PC-3 (cell line): ENCODE measurements at regions of chr1 and their contacts with region 1.

Region 1: DNA sequence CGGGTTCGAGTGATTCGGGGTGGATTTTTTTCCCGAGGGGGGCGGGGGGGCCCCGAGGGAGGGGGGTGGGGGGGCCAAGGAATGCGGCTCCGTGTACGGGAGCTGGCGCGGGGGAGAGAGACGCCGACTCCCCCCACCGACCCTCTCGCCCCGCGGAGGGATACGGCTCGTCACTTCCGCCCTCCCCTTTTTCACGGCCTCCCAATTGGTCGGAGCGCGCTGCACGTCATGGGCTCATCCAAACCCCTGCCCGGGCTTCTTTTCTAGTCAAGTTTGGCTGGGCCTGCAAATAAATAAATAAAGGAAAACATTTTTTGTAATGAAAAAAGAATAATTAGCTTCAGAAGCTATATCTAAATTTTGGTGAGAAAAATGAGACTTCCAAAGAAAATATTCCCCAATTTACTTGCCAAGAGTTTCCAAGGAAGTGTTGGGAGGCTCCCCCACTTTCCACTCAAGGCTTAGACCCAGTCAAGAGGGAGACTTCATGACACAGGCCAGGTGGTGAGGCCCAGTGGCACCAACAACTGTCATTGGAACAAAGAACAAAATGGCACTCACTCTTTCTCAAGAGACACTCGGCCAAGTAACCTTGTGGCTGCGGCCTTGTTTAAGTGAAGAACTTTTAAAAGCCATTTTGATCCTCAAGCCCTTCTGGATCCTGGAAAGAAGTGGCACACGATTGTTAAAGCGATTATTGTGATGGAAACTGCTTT is at the start of gene POGZ:
- DNase-seq: peak; percentile 97
- ATAC-seq: peak; percentile 81
- H3K4me3 ChIP-seq: peak within 1 kb of the TSS; percentile 100
- H3K27ac ChIP-seq: peak within 1 kb of the TSS; percentile 79
- H3K4me1 ChIP-seq: peaks cover 12% of the 10 kb centered on the region
- H3K27me3 ChIP-seq: no peaks in the 10 kb centered on the region
- CTCF ChIP-seq: no peak
- total RNA-seq, gene POGZ: 30.5 and 77.9 TPM in 2 replicates

Region 2: GRCh38 chr1:151472856-151473731 is 13.6 kb after region 1 on chr1:
- CTCF ChIA-PET with region 1: no interaction called
- POLR2A ChIA-PET with region 1: interaction called, 6 read pairs
- intact Hi-C with region 1: loop called (anchors 1 kb)
- DNase-seq: peak; percentile 43
- ATAC-seq: peak; percentile 51
- H3K4me3 ChIP-seq: peak overlapping the region; percentile 41
- H3K27ac ChIP-seq: no peak overlapping the region
- H3K4me1 ChIP-seq: no peaks in the 10 kb centered on the region
- H3K27me3 ChIP-seq: no peaks in the 10 kb centered on the region
- CTCF ChIP-seq: no peak

Region 3: GRCh38 chr1:151510957-151511635 is 51.6 kb after region 1 on chr1 and contains the start of gene CGN:
- CTCF ChIA-PET with region 1: no interaction called
- POLR2A ChIA-PET with region 1: interaction called, 8 read pairs
- intact Hi-C with region 1: loop called (anchors 1 kb)
- DNase-seq: peak; percentile 95
- ATAC-seq: peak; percentile 80
- H3K4me3 ChIP-seq: peak within 1 kb of the TSS; percentile 84
- H3K27ac ChIP-seq: peak within 1 kb of the TSS; percentile 96
- H3K4me1 ChIP-seq: peaks cover 50% of the 10 kb centered on the region
- H3K27me3 ChIP-seq: no peaks in the 10 kb centered on the region
- CTCF ChIP-seq: no peak
- total RNA-seq, gene CGN: 13.3 and 20.1 TPM in 2 replicates

Region 4: GRCh38 chr1:151539990-151540981 is 80.8 kb after region 1 on chr1 and contains the start of gene TUFT1:
- CTCF ChIA-PET with region 1: no interaction called
- POLR2A ChIA-PET with region 1: no interaction called
- intact Hi-C with region 1: loop called (anchors 2 kb)
- DNase-seq: peak; percentile 97
- ATAC-seq: peak; percentile 77
- H3K4me3 ChIP-seq: peak within 1 kb of the TSS; percentile 81
- H3K27ac ChIP-seq: peak within 1 kb of the TSS; percentile 86
- H3K4me1 ChIP-seq: peaks cover 61% of the 10 kb centered on the region
- H3K27me3 ChIP-seq: no peaks in the 10 kb centered on the region
- CTCF ChIP-seq: no peak
- total RNA-seq, gene TUFT1: 33.9 and 46.9 TPM in 2 replicates